Activated naive CD4-positive, alpha-beta T cell treated with anti-CD3 and anti-CD28 coated beads for 36 hours (primary cell): ENCODE measurements at regions of chr7 and their contacts with region 1.

Region 1: GRCh38 chr7:82729172-82730030 is 285.8 kb upstream of the CACNA2D1 start:
- DNase-seq: no peak
- H3K4me3 Mint-ChIP-seq: no peak overlapping the region
- H3K27ac Mint-ChIP-seq: no peak overlapping the region
- H3K4me1 Mint-ChIP-seq: no peaks in the 10 kb centered on the region
- H3K27me3 Mint-ChIP-seq: no peaks in the 10 kb centered on the region

Region 2: DNA sequence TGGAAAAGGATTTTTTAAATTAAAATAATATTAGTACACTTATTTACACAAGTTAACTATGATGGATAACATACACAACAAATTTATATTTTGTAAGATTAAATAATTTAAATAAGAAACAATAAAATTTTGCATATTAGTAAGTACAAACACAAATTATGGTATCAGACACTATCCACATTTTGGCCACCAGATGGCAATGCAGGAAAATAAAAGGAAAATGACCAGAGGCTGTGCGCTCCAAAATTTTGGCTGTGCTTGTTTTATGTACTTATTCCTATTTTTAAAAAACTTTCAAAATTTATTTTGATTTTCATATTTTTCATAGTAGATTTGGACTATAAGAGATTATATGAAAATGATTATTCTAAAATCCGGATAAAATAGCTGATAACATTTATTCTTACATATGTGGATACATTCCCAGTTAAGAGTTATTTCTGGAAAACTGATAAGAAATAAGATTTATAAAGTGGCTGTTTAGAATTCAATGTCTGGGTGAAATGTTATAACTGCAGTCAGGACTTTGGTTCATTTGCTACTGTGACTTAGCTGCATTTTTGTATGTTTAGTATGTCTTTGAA is 684.8 kb before region 1 on chr7:
- CTCF ChIA-PET with region 1: no interaction called
- intact Hi-C with region 1: loop called (anchors 1 kb)
- DNase-seq: peak; percentile 46
- H3K4me3 Mint-ChIP-seq: no peak overlapping the region
- H3K27ac Mint-ChIP-seq: no peak overlapping the region
- H3K4me1 Mint-ChIP-seq: no peaks in the 10 kb centered on the region
- H3K27me3 Mint-ChIP-seq: no peaks in the 10 kb centered on the region

Region 3: DNA sequence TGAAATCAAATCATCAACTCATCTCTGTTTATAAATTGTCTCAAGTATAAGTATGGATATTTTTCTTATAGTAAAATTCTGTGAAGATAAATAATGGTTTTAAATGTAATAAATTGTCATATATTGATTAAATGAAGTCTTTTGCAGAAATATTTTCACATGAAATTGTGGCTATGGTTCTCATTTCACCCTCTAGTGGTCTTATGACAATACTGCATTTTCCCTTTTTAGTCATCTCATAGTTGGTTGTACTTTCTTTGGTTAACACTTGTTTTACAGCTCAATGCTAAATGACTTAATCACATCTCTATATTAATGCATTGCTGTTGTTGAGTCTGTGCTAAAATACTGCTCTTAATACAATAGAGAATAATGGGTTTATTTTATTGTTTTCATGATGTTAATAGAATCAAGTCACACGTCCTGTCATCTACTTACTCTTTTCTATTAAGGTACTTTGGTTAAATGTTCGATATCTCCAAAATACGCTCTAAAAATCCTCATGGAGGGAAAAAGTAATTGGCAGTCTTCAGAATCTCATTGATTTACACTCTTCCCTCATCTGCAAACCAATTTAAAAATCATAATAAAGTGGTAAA is 247.8 kb before region 1 on chr7:
- CTCF ChIA-PET with region 1: no interaction called
- intact Hi-C with region 1: loop called (anchors 1 kb)
- DNase-seq: no peak
- H3K4me3 Mint-ChIP-seq: no peak overlapping the region
- H3K27ac Mint-ChIP-seq: no peak overlapping the region
- H3K4me1 Mint-ChIP-seq: no peaks in the 10 kb centered on the region
- H3K27me3 Mint-ChIP-seq: peaks cover under 1% of the 10 kb centered on the region

Region 4: DNA sequence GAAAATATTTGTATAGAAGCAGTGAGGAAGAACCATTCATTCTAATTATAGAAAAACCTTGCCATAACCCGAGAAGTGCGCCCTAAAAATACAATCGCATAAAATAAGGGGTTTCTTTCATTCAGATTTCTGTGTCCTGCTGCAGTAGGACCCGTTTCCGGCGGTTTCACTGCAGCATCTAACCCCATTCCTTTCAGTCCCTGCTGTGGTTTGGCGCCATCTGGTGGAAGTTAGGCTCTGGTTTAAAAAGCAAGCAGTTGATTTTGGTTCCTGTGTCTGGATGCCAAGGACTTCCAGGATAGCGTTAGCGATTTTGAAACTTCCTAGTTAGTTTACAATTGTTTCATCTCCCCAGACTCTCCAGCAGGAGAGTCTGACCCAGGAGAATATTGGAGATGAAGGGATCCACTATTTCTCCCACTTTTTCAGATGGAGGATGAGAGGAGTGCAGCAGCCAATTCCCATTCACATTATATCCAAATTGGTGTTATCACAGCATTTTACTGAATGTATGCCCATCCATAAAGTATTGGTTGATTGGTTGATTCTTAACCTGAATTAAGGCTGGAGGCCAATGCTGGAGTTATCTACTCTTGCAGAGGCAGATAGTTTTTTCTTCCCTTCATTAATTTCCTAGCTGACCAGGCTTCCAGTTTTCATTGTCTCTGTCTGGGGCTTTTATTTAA is 157.1 kb before region 1 on chr7:
- CTCF ChIA-PET with region 1: no interaction called
- intact Hi-C with region 1: loop called (anchors 1 kb)
- DNase-seq: peak; percentile 84
- H3K4me3 Mint-ChIP-seq: no peak overlapping the region
- H3K27ac Mint-ChIP-seq: no peak overlapping the region
- H3K4me1 Mint-ChIP-seq: no peaks in the 10 kb centered on the region
- H3K27me3 Mint-ChIP-seq: no peaks in the 10 kb centered on the region

Region 5: GRCh38 chr7:82605247-82605872 is 124.0 kb before region 1 on chr7:
- CTCF ChIA-PET with region 1: no interaction called
- intact Hi-C with region 1: loop called (anchors 2 kb)
- DNase-seq: peak; percentile 20
- H3K4me3 Mint-ChIP-seq: no peak overlapping the region
- H3K27ac Mint-ChIP-seq: no peak overlapping the region
- H3K4me1 Mint-ChIP-seq: no peaks in the 10 kb centered on the region
- H3K27me3 Mint-ChIP-seq: no peaks in the 10 kb centered on the region

Region 6: DNA sequence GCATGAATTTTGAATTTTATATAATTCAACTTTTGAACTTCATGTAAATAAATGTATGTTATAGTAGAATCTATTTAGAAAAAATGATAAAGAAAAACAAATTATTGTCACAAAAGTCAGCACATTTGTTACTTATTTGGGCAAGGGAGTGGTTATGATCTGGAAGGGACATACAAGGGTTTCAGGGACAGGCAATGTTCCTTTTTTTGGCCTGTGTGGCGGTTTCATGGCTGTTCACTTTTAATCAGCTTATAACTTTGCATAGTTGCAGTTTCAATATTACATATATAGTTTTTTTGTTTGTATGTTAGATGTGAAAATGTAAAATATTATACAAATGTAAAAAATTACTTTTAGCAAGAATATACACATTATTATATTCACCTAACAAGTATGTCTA is 177.1 kb after region 1 on chr7:
- CTCF ChIA-PET with region 1: no interaction called
- intact Hi-C with region 1: no loop called
- DNase-seq: no peak
- H3K4me3 Mint-ChIP-seq: no peak overlapping the region
- H3K27ac Mint-ChIP-seq: no peak overlapping the region
- H3K4me1 Mint-ChIP-seq: no peaks in the 10 kb centered on the region
- H3K27me3 Mint-ChIP-seq: no peaks in the 10 kb centered on the region